ENCODE measurements at regions of chr7 and their contacts with region 1.

Region 1: GRCh38 chr7:3143869-3144775 is 100.5 kb upstream of the CARD11 start:
- DNase-seq: no peak
- ATAC-seq: no peak
- H3K4me3 ChIP-seq: no peak overlapping the region
- H3K27ac ChIP-seq: no peak overlapping the region
- H3K4me1 ChIP-seq: no peaks in the 10 kb centered on the region
- H3K27me3 ChIP-seq: peaks cover 3% of the 10 kb centered on the region; the same call in 1 of the 2 replicates
- CTCF ChIP-seq: no peak
- POLR2A ChIP-seq: no peak
- RAD21 ChIP-seq: no peak

Region 2: DNA sequence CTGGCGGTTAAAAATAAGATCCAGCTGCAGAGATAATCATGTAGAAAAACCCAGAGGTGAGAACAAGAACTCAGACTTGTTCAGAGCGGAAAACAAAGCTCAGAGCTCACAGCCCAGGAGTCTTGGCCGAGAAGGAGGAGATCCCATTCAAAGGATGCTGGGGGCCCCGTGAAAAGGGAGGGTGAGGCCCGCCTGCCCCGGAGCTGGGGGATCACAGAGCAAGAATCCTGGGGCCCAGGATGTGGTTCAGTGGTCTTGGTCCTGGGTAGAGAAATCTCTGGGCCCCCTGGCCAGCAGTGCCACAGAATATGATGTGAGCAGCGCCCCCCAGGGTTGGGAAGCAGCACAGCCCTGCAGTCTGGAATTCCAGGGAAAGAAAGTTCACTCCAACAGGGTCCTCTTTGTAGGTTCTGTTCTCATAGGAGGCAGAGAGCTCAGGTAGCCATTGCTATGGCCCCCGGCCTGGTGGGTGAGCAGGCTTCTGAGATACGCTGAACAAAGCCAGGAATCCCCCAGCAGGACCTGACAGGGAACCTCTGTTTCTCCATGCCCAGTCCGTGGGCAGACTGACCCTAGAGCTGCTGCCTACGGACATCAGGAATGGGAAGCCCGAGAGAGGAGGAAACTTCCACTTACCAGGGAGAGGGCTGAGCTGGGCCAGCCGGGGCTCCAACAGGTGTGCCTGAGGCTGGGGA is 222.3 kb before region 1 on chr7:
- CTCF ChIA-PET with region 1: no interaction called
- POLR2A ChIA-PET with region 1: no interaction called
- dilution Hi-C with region 1: no loop called
- in situ Hi-C with region 1: no loop called
- intact Hi-C with region 1: loop called (anchors 1 kb)
- DNase-seq: no peak
- ATAC-seq: no peak
- H3K4me3 ChIP-seq: no peak overlapping the region
- H3K27ac ChIP-seq: no peak overlapping the region
- H3K4me1 ChIP-seq: no peaks in the 10 kb centered on the region
- H3K27me3 ChIP-seq: peaks cover 17% of the 10 kb centered on the region; the same call in 1 of the 2 replicates
- CTCF ChIP-seq: no peak
- POLR2A ChIP-seq: no peak
- RAD21 ChIP-seq: no peak

Region 3: GRCh38 chr7:3013975-3014792 is 129.9 kb before region 1 on chr7:
- CTCF ChIA-PET with region 1: no interaction called
- POLR2A ChIA-PET with region 1: no interaction called
- dilution Hi-C with region 1: no loop called
- in situ Hi-C with region 1: no loop called
- intact Hi-C with region 1: no loop called
- DNase-seq: no peak
- ATAC-seq: no peak
- H3K4me3 ChIP-seq: no peak overlapping the region
- H3K27ac ChIP-seq: no peak overlapping the region
- H3K4me1 ChIP-seq: no peaks in the 10 kb centered on the region
- H3K27me3 ChIP-seq: no peaks in the 10 kb centered on the region
- CTCF ChIP-seq: no peak
- POLR2A ChIP-seq: no peak
- RAD21 ChIP-seq: no peak

Region 4: GRCh38 chr7:3179456-3179855 is 35.3 kb after region 1 on chr7:
- CTCF ChIA-PET with region 1: no interaction called
- POLR2A ChIA-PET with region 1: no interaction called
- dilution Hi-C with region 1: no loop called
- in situ Hi-C with region 1: no loop called
- intact Hi-C with region 1: no loop called
- DNase-seq: no peak
- ATAC-seq: no peak
- H3K4me3 ChIP-seq: no peak overlapping the region
- H3K27ac ChIP-seq: no peak overlapping the region
- H3K4me1 ChIP-seq: no peaks in the 10 kb centered on the region; the same call in 1 of the 2 replicates
- H3K27me3 ChIP-seq: peaks cover 6% of the 10 kb centered on the region; the same call in 1 of the 2 replicates
- CTCF ChIP-seq: no peak
- POLR2A ChIP-seq: no peak
- RAD21 ChIP-seq: no peak

Region 5: GRCh38 chr7:3537210-3537875 is 393.2 kb after region 1 on chr7:
- CTCF ChIA-PET with region 1: no interaction called
- POLR2A ChIA-PET with region 1: no interaction called
- dilution Hi-C with region 1: no loop called
- in situ Hi-C with region 1: no loop called
- intact Hi-C with region 1: no loop called
- DNase-seq: peak; percentile 80
- ATAC-seq: peak; percentile 99
- H3K4me3 ChIP-seq: no peak overlapping the region
- H3K27ac ChIP-seq: no peak overlapping the region
- H3K4me1 ChIP-seq: peaks cover 3% of the 10 kb centered on the region; the same call in 1 of the 2 replicates
- H3K27me3 ChIP-seq: no peaks in the 10 kb centered on the region
- CTCF ChIP-seq: no peak
- POLR2A ChIP-seq: no peak
- RAD21 ChIP-seq: no peak

Region 6: DNA sequence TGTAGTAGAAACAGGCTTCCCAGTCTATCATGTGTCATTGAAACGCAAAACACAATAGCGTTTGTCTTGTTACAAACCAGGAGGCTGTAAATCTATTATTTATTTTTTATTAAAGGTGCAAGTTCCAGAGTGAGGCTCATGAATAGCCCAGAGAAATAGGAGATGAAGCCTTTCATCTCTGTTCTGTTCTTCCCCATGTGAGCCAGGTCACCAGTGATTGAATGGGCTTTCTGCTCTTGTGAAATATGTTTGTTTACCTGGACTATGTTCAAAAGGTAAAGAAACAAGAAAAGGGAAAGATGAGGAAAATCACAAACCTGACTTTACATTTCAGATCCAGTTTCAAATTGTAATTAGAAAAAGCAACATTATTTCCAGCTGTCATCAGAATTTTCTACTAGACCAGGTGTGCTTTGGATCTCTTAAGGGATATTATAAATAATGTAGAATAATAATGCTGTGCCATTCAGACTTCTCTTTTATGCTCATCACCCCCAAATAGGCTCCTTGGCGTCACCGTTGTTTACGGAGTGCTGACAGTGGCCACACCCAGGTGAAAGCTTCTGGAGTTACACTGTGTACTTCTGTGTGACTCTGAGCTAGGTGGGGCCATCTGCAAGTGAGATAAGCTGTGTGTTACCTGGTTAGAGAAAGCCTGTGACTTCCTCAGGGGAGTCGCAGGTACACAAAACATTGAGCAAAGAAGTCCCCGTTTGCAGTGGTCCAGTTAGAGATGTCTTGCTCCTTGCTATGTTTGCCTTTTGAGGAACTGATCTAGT is 431.8 kb after region 1 on chr7:
- CTCF ChIA-PET with region 1: no interaction called
- POLR2A ChIA-PET with region 1: no interaction called
- dilution Hi-C with region 1: no loop called
- in situ Hi-C with region 1: no loop called
- intact Hi-C with region 1: no loop called
- DNase-seq: no peak
- ATAC-seq: no peak
- H3K4me3 ChIP-seq: no peak overlapping the region
- H3K27ac ChIP-seq: no peak overlapping the region
- H3K4me1 ChIP-seq: no peaks in the 10 kb centered on the region
- H3K27me3 ChIP-seq: no peaks in the 10 kb centered on the region
- CTCF ChIP-seq: no peak
- POLR2A ChIP-seq: no peak
- RAD21 ChIP-seq: no peak